ENCODE measurements at regions of chr3 and their contacts with region 1.

Region 1: DNA sequence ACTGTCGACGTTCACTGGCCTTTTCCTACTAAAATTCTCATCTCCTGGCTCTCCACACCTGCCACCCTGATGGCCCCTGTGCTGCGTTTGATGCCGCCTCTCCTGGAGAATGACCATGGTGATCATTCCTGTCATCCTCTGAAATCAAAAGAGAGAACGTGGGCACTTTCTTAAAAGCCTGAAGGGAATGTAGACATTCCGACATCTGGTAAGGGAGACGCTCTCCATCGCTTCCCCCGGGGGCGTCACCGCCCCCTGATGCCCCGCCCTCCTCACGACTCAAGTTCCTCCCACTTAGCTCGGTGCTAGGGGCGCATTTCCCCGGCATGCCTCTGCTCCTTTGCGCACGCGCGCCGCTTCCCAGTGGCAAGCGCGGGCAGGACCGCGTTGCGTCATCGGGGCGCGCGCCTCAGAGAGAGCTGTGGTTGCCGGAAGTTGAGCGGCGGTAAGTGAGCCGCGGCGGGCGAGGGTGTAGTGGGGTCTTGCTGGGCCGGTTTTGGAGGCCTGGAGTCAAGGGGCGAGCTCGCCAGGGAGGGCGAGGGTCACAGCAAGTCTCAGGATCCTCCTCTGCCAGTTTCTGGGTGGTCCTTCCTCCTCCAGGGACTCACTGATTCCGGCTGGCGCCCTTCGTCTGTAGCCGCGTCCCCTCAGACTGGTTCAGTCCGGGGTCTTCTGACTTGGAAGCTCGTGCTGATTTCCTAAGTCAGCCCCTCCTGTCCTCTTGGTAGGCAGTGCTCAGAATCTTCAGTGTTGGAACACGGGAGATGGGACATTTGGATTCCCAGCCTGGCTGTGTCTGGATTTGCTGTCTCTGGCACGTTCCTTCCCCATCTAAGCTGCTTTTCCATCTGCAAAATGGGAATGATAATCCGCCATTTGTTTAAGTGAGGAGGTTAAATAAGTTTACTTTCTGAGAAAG is at the start of gene ATG7:
- DNase-seq: peak; percentile 98
- ATAC-seq: peak; percentile 98
- H3K4me3 ChIP-seq: peak within 1 kb of the TSS; percentile 94 to 100 (median 99)
- H3K4me3 Mint-ChIP-seq: peak within 1 kb of the TSS; percentile 97
- H3K27ac ChIP-seq: peak within 1 kb of the TSS; percentile 91 to 95
- H3K27ac Mint-ChIP-seq: peak within 1 kb of the TSS; percentile 98
- H3K4me1 ChIP-seq: peaks cover 17 to 20% of the 10 kb centered on the region in 2 donors
- H3K4me1 Mint-ChIP-seq: peaks cover 47% of the 10 kb centered on the region
- H3K27me3 ChIP-seq: no peaks in the 10 kb centered on the region
- H3K27me3 Mint-ChIP-seq: peaks cover 2% of the 10 kb centered on the region
- CTCF ChIP-seq: no peak
- total RNA-seq, gene ATG7: 66.4 and 72.7 TPM in 2 replicates

Region 2: DNA sequence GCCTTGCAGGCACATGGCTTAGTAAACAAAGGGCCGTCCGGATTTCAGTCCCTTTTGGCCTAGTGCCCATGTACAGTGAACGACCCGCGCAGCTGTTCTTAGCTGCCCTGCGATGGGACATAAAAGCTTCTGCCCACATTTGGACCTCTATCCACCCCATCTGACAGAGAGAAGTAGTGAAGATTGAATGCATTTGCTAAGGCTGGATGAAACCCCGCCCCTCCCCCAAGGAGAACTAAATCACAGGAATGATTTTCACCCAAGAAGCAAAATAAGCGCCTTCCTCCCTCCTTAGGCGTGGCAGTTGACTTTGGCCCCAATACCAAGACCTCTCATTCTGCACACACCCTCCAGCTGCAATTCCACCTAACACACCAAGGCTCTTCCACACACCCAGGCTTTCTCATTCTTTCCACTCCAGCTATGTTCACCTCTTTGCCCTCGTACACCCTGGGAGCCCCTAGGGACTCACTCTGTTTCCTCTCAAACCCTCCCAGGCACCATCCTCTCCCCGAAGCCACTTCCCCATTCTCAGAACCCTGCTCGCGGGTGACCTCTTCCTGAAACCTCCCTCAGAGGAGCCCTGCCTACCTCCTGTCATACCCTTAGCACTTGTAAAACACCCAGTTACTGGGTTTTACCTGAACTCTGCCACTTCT is 132.1 kb before region 1 on chr3:
- CTCF ChIA-PET with region 1: no interaction called
- POLR2A ChIA-PET with region 1: no interaction called
- intact Hi-C with region 1: loop called (anchors 1 kb)
- DNase-seq: peak; percentile 84
- ATAC-seq: peak; percentile 99
- H3K4me3 ChIP-seq: peak overlapping the region in 2 of 5 experiments; percentile 15 to 16
- H3K4me3 Mint-ChIP-seq: peak overlapping the region; percentile 49
- H3K27ac ChIP-seq: peak overlapping the region; percentile 2 to 25
- H3K27ac Mint-ChIP-seq: peak overlapping the region; percentile 54
- H3K4me1 ChIP-seq: peaks cover 20 to 29% of the 10 kb centered on the region in 2 donors
- H3K4me1 Mint-ChIP-seq: peaks cover 40% of the 10 kb centered on the region
- H3K27me3 ChIP-seq: no peaks in the 10 kb centered on the region
- H3K27me3 Mint-ChIP-seq: no peaks in the 10 kb centered on the region
- CTCF ChIP-seq: no peak

Region 3: DNA sequence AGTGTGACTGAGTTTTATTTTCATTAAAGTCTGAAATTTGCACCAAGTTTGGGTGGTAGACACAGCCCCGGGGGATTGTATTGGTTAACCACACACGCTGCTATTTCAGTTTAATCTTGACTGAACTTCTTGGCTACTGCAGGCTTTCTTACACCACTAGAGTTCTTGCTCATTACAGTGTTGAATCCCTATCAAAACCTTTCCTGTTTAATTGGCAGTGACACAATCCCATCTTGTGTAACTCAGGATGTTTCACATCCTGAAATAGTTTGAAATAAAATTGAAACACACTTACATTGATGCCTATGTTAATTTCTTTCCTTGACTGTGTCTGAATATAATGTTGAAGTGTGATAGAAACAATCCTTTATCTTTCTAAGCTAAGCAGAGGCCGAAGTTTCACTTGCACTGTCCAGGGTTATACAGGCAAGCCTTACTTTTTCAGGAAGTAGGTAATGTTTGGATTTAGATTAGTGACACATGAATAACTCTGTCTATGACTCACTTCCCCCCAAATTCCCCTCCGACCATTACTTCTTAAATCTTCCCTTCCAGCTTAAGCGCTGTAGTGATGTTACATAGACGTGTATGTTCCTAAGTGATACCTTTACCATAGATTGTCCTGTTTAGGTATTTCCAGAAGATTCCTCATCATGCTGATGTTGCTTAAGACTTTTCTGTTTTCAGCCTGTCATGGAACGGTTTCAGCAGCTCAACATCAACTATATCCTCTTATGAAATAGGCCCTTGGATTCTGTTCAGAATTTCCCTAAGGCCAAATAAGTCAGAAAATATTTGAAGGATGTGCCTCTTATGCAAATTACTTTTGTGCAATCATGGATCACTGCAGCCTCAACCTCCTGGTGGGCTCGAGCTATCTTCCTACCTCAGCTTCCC is 16.8 kb after region 1 on chr3:
- CTCF ChIA-PET with region 1: interaction called, 23 read pairs
- POLR2A ChIA-PET with region 1: interaction called, 29 read pairs
- intact Hi-C with region 1: loop called (anchors 1 kb)
- DNase-seq: peak; percentile 88
- ATAC-seq: peak; percentile 89
- H3K4me3 ChIP-seq: peak overlapping the region; percentile 6 to 63 (median 33)
- H3K4me3 Mint-ChIP-seq: peak overlapping the region; percentile 85
- H3K27ac ChIP-seq: peak overlapping the region; percentile 91 to 98
- H3K27ac Mint-ChIP-seq: peak overlapping the region; percentile 98
- H3K4me1 ChIP-seq: peaks cover 48 to 49% of the 10 kb centered on the region in 2 donors
- H3K4me1 Mint-ChIP-seq: peaks cover 57% of the 10 kb centered on the region
- H3K27me3 ChIP-seq: no peaks in the 10 kb centered on the region
- H3K27me3 Mint-ChIP-seq: no peaks in the 10 kb centered on the region
- CTCF ChIP-seq: no peak

Region 4: DNA sequence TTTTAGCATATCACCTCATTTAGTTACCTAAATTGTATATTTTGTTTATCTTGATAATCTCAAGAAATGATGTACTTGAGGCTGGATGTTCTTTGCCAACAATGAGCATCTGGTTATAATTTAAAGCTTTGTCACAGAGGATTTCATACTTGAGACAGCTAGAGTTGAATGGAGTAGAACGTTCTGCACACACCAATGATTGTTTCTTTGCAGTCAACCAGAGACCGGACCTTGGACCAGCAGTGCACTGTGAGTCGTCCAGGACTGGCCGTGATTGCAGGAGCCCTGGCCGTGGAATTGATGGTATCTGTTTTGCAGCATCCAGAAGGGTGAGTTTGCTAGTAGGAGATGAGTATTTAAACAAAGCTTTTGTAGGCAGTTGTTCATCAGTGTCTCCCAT is 90.4 kb after region 1 on chr3:
- CTCF ChIA-PET with region 1: no interaction called
- POLR2A ChIA-PET with region 1: no interaction called
- intact Hi-C with region 1: no loop called
- DNase-seq: no peak
- ATAC-seq: no peak
- H3K4me3 ChIP-seq: no peak overlapping the region
- H3K4me3 Mint-ChIP-seq: no peak overlapping the region
- H3K27ac ChIP-seq: no peak overlapping the region
- H3K27ac Mint-ChIP-seq: no peak overlapping the region
- H3K4me1 ChIP-seq: no peaks in the 10 kb centered on the region
- H3K4me1 Mint-ChIP-seq: no peaks in the 10 kb centered on the region
- H3K27me3 ChIP-seq: no peaks in the 10 kb centered on the region
- H3K27me3 Mint-ChIP-seq: no peaks in the 10 kb centered on the region
- CTCF ChIP-seq: no peak

Region 5: GRCh38 chr3:11568503-11569155 is 296.4 kb after region 1 on chr3:
- CTCF ChIA-PET with region 1: no interaction called
- POLR2A ChIA-PET with region 1: no interaction called
- intact Hi-C with region 1: no loop called
- DNase-seq: no peak
- ATAC-seq: no peak
- H3K4me3 ChIP-seq: no peak overlapping the region
- H3K4me3 Mint-ChIP-seq: no peak overlapping the region
- H3K27ac ChIP-seq: no peak overlapping the region
- H3K27ac Mint-ChIP-seq: no peak overlapping the region
- H3K4me1 ChIP-seq: no peaks in the 10 kb centered on the region
- H3K4me1 Mint-ChIP-seq: no peaks in the 10 kb centered on the region
- H3K27me3 ChIP-seq: no peaks in the 10 kb centered on the region
- H3K27me3 Mint-ChIP-seq: no peaks in the 10 kb centered on the region
- CTCF ChIP-seq: no peak

Region 6: DNA sequence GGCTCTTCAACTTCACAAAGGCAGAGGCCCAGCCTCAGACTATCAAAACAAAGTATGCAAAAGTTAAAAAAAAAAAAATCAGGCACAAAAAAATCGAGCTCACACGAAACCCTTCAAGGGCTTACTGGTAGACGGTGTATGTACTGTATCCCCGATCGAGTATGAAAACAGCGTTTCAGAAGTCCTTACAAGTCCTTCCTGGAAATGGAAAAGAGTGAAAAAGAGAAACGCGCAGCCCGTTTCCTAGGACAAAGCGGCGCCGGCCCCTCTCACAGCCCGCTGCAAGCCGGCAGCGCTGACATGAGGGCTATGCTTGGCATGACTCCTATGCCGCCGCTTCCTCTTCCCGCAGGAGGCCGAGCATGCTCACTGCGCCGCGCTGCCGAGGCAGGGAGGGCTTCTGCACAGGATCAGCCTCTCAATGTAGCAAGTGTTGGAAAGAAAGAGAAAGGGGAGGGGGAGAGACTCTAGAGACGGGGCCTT is 371.4 kb after region 1 on chr3 and contains the start of gene VGLL4:
- CTCF ChIA-PET with region 1: no interaction called
- POLR2A ChIA-PET with region 1: interaction called, 4 read pairs
- intact Hi-C with region 1: loop called (anchors 1 kb)
- DNase-seq: peak; percentile 71
- ATAC-seq: peak; percentile 62
- H3K4me3 ChIP-seq: peak within 1 kb of the TSS; percentile 75 to 98 (median 83)
- H3K4me3 Mint-ChIP-seq: peak within 1 kb of the TSS; percentile 91
- H3K27ac ChIP-seq: peak within 1 kb of the TSS; percentile 80 to 91
- H3K27ac Mint-ChIP-seq: peak within 1 kb of the TSS; percentile 91
- H3K4me1 ChIP-seq: peaks cover 7 to 18% of the 10 kb centered on the region in 2 donors
- H3K4me1 Mint-ChIP-seq: peaks cover 31% of the 10 kb centered on the region
- H3K27me3 ChIP-seq: no peaks in the 10 kb centered on the region
- H3K27me3 Mint-ChIP-seq: no peaks in the 10 kb centered on the region
- CTCF ChIP-seq: no peak
- total RNA-seq, gene VGLL4: 29.0 and 30.2 TPM in 2 replicates

Region 7: DNA sequence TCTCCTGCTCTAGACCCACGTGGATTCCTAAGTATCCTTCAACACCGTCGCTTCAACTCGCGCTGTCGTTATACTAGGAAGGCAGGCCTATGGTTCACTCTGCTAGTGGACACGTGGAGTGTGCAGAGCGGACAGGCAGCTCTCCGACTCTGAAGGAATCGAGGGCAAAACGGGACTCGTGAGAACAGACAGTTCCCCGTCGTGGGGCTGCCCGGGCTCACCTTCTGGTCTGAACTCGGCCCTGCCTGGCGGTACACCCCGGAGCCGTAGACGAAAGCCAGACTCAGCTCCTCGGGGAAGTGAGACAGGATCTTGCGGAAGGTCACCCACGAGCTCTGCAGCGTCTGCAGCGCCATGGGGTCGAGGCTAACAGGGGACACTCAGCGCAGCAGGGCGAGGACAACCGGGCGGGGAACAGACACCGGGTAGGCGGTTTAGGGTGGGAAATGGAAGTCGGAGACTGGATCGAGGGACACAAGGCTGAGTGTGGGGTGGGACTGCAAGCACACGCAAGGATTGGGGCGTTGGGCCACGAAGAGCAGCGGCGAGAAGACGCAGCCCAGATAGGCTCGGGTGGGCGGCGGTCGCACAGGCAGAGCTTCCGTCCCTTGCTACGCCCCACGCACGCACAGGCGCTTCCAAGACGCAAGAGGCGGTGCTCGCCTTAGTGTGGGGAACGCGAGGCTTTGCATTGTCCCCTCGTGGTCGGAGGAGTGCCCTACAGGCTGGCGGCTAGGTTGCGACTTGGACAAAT is 574.2 kb after region 1 on chr3 and contains the start of gene TAMM41:
- CTCF ChIA-PET with region 1: no interaction called
- POLR2A ChIA-PET with region 1: no interaction called
- intact Hi-C with region 1: loop called (anchors 1 kb)
- DNase-seq: peak; percentile 90
- ATAC-seq: peak; percentile 100
- H3K4me3 ChIP-seq: peak within 1 kb of the TSS; percentile 56 to 96 (median 82)
- H3K4me3 Mint-ChIP-seq: peak within 1 kb of the TSS; percentile 99
- H3K27ac ChIP-seq: peak within 1 kb of the TSS; percentile 77 to 82
- H3K27ac Mint-ChIP-seq: peak within 1 kb of the TSS; percentile 96
- H3K4me1 ChIP-seq: peaks cover 22 to 27% of the 10 kb centered on the region in 2 donors
- H3K4me1 Mint-ChIP-seq: peaks cover 39% of the 10 kb centered on the region
- H3K27me3 ChIP-seq: no peaks in the 10 kb centered on the region
- H3K27me3 Mint-ChIP-seq: no peaks in the 10 kb centered on the region
- CTCF ChIP-seq: peak; percentile 74
- total RNA-seq, gene TAMM41: 52.3 and 54.2 TPM in 2 replicates

Region 8: DNA sequence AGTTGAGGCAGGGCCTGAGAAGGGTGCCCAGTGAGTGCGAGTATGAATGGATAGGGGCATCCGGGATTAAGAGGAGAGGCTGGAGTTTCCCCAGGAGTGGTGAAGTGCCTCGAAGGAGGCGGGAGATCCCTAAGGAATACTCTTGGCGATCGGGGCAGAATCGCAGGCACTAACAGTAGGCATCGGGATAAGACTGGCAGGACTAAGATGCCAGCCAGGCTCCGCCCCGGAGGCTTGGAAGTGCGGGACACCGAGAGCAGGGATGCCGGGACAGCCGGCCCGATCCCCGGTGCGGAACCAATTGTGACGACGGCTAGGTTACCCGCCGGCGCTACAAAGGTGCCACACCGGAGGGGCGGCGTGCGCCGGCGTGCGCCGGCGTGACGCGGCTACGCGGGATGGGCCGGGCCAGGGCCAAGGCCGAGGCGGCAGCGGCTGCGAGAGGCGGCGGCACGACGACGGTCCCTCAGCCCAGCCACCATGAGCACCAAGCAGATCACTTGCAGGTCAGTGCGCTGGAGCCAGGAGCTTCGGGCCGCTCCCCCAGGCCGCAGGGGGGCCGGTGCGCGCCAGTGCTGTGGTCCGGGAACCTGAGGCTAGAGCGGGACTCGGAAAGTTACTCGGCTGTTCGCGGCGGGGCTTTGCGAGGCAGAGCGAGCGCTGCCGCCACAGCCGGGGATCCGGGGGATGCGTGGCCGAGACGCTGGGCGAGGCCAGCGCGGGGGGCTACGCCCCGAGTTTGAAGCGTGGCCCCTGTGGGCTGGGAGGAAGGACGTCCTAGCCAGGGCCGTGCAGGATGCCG is 1284.6 kb after region 1 on chr3 and contains the start of gene MKRN2:
- CTCF ChIA-PET with region 1: no interaction called
- POLR2A ChIA-PET with region 1: no interaction called
- intact Hi-C with region 1: loop called (anchors 2 kb)
- DNase-seq: peak; percentile 91
- ATAC-seq: peak; percentile 96
- H3K4me3 ChIP-seq: peak within 1 kb of the TSS; percentile 85 to 91 (median 90)
- H3K4me3 Mint-ChIP-seq: peak within 1 kb of the TSS; percentile 91
- H3K27ac ChIP-seq: peak within 1 kb of the TSS; percentile 91 to 92
- H3K27ac Mint-ChIP-seq: peak within 1 kb of the TSS; percentile 84
- H3K4me1 ChIP-seq: peaks cover 40 to 41% of the 10 kb centered on the region in 2 donors
- H3K4me1 Mint-ChIP-seq: peaks cover 60% of the 10 kb centered on the region
- H3K27me3 ChIP-seq: peaks cover 0 to 17% (median 5%) of the 10 kb centered on the region in 4 experiments
- H3K27me3 Mint-ChIP-seq: peaks cover 23% of the 10 kb centered on the region
- CTCF ChIP-seq: no peak
- total RNA-seq, gene MKRN2: 25.9 and 29.3 TPM in 2 replicates